ENCODE measurements at regions of chr22 and their contacts with region 1.

Region 1: GRCh38 chr22:50148991-50149721 is 21.4 kb upstream of the PANX2 start:
- DNase-seq: peak; percentile 84
- ATAC-seq: peak; percentile 99
- H3K4me3 Mint-ChIP-seq: no peak overlapping the region
- H3K27ac Mint-ChIP-seq: no peak overlapping the region
- H3K4me1 Mint-ChIP-seq: peaks cover 2% of the 10 kb centered on the region
- H3K27me3 Mint-ChIP-seq: peaks cover 2% of the 10 kb centered on the region
- CTCF ChIP-seq: peak; percentile 94

Region 2: GRCh38 chr22:50044485-50045118 is 104.6 kb before region 1 on chr22:
- CTCF ChIA-PET with region 1: no interaction called
- POLR2A ChIA-PET with region 1: no interaction called
- intact Hi-C with region 1: no loop called
- DNase-seq: peak; percentile 49
- ATAC-seq: peak; percentile 76
- H3K4me3 Mint-ChIP-seq: no peak overlapping the region
- H3K27ac Mint-ChIP-seq: no peak overlapping the region
- H3K4me1 Mint-ChIP-seq: peaks cover 9% of the 10 kb centered on the region
- H3K27me3 Mint-ChIP-seq: peaks cover 19% of the 10 kb centered on the region
- CTCF ChIP-seq: no peak

Region 3: DNA sequence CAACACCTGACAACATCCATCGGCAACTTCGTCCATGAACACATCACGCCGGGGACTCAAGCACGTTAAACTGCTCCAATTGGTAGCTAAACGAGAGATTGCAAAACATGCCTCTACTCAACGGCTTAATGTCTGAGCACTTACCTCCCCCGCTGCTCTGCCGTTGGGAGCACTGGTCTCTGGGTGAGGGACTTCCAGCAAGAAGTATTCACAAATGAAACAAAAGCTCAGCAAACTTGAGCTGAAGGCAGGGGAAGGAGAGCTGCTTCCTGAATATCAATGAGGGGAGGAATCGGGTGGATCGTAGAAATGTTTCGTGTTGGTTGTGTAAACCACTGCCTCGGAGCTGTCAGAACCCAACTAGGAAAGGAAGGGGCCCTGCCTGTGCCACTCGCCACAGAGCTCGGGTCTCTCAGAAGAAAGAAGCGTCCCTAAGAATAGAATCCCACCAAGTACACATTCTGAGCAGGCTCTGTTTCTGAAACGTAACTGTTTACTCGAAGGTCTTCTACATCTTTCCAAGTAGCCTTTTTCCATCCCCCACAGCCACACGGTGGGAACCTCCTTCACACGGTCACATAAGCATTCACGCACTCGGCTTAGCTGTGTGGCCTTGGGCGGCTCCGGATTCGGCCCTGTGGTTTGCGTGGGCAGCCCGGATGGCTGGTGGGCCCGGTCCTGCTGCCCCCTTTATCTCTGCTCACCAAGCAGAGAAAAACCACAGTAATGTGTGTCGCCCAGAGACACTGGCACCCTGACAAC is 63.8 kb before region 1 on chr22 and contains the start of gene MLC1:
- CTCF ChIA-PET with region 1: no interaction called
- POLR2A ChIA-PET with region 1: no interaction called
- intact Hi-C with region 1: no loop called
- DNase-seq: peak; percentile 63
- ATAC-seq: no peak
- H3K4me3 Mint-ChIP-seq: no peak within 1 kb of the TSS
- H3K27ac Mint-ChIP-seq: peak within 1 kb of the TSS; percentile 73
- H3K4me1 Mint-ChIP-seq: peaks cover 4% of the 10 kb centered on the region
- H3K27me3 Mint-ChIP-seq: peaks cover 11% of the 10 kb centered on the region
- CTCF ChIP-seq: no peak
- total RNA-seq, gene MLC1: 1.3 to 1.5 TPM

Region 4: DNA sequence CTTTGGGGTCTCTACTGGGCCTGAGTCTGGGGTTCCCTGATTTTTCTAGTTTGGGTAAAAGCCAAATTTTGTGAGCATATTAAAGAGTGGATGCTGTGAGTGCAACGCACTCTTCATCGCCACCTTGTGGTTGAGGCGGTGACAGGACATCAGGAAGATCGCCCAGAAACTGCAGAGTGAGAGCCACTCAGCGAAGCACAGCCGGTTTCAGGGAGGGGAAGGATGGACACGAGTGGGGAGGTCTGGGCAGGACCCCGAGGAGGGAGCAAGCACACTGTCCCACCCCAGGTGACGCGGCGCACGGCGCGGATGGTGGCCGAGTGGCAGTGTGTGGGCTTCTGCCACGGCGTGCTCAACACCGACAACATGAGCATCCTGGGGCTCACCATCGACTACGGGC is 60.7 kb after region 1 on chr22:
- CTCF ChIA-PET with region 1: interaction called, 25 read pairs
- POLR2A ChIA-PET with region 1: interaction called, 3 read pairs
- intact Hi-C with region 1: loop called (anchors 5 kb)
- DNase-seq: peak; percentile 83
- ATAC-seq: peak; percentile 88
- H3K4me3 Mint-ChIP-seq: no peak overlapping the region
- H3K27ac Mint-ChIP-seq: peak overlapping the region; percentile 44
- H3K4me1 Mint-ChIP-seq: peaks cover 7% of the 10 kb centered on the region
- H3K27me3 Mint-ChIP-seq: no peaks in the 10 kb centered on the region
- CTCF ChIP-seq: peak; percentile 90